ENCODE measurements at regions of chr11 and their contacts with region 1.

Region 1: GRCh38 chr11:65095974-65096806 is at the start of gene VPS51:
- DNase-seq: peak; percentile 91
- H3K4me3 Mint-ChIP-seq: peak within 1 kb of the TSS; percentile 97
- H3K27ac Mint-ChIP-seq: peak within 1 kb of the TSS; percentile 96
- H3K4me1 Mint-ChIP-seq: peaks cover 25% of the 10 kb centered on the region
- H3K27me3 Mint-ChIP-seq: no peaks in the 10 kb centered on the region
- total RNA-seq, gene VPS51: 117 to 123 TPM

Region 2: DNA sequence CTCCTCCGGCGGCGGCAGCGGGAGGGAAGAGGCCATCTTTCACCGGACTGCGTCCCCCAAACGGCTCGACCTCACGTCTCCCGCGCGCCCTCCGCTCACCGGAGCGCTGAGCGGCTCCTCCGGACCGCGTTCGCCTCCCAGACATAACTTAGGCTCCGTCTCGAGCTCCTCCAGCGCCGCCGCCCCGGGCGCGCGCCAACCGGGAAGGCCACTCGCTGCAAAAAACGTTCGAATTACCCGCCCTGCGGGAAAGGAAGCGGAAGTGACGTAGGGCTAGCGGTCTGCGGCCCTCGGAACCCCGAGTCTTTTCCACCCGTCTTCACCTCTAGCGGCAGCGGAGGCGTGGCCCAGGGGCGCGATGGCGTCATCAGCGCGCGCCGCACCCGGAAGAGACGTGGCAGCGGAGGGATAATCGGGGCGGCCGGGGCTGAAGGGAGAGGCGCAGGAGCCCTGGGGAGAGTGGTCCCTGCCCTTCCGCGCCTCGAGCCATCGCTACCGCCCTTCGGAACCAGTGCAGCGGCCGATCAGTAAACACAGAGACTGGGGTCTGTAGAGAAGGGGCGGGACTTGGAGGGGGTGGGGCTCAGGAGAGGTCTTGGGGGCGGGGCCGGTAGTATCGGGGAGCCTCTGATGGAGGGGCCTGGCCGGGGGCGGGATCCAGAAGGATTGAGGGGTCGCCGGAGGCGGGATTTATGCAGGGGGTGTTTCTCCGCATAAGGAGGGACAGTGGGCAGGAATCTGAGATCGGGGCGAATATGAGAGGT is 12.2 kb before region 1 on chr11 and contains the starts of genes CDCA5 and ZFPL1:
- CTCF ChIA-PET with region 1: interaction called, 4 read pairs
- POLR2A ChIA-PET with region 1: interaction called, 45 read pairs
- DNase-seq: peak; percentile 96
- H3K4me3 Mint-ChIP-seq: peak within 1 kb of the TSS; percentile 91
- H3K27ac Mint-ChIP-seq: peak within 1 kb of the TSS; percentile 88
- H3K4me1 Mint-ChIP-seq: peaks cover 62% of the 10 kb centered on the region
- H3K27me3 Mint-ChIP-seq: no peaks in the 10 kb centered on the region
- total RNA-seq, gene CDCA5: 98.2 to 104 TPM
- total RNA-seq, gene ZFPL1: 30.1 to 31.6 TPM